ENCODE measurements at regions of chr18 and their contacts with region 1.

Region 1: DNA sequence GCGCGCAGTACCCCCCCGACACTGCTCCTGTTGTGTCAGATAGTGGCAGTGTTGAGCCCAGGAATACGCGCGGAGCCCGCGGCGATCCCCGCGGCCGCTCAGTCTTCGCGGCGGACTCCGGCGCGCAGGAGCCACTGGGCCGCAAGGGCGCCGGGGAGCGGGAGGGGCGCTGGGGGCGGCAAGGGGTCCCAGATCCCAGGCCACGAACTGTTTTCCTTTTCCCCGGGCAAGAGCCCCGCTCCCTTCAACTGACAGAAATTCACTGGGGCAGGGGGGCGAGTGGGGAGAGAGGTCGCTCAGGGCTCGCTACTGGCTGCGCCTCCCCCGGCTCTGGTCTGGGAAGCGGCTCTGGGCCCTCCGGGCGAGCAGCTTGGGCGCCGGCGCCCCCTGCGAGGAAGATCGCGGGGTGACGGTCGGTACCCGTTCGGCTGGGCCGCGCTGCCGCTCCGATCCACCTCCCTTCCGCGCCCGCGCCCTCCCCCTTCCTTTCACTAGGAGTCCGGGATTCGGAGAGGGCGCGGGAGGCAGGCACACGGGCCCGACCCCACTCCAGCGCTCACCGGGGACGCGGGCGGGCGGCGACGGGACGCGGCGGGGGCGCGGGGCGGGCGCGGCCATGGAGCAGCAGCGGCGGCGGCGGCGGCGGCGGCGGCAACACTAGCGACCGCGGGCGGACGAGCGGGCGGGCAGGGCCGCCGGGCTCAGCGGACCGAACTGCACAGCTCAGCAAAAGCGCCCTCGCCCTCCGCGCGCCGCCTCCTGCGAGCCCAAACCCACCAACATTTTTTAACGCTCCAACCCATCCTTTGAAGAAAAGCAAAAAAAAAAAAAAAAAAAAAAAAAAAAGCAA is 1.4 kb upstream of the SETBP1 start:
- DNase-seq: peak; percentile 69 to 97 (median 86)

Region 2: GRCh38 chr18:44013871-44014270 is 665.4 kb before region 1 on chr18:
- intact Hi-C with region 1: no loop called
- DNase-seq: no peak

Region 3: GRCh38 chr18:44771956-44772917 is 93.0 kb after region 1 on chr18:
- intact Hi-C with region 1: no loop called
- DNase-seq: no peak

Region 4: DNA sequence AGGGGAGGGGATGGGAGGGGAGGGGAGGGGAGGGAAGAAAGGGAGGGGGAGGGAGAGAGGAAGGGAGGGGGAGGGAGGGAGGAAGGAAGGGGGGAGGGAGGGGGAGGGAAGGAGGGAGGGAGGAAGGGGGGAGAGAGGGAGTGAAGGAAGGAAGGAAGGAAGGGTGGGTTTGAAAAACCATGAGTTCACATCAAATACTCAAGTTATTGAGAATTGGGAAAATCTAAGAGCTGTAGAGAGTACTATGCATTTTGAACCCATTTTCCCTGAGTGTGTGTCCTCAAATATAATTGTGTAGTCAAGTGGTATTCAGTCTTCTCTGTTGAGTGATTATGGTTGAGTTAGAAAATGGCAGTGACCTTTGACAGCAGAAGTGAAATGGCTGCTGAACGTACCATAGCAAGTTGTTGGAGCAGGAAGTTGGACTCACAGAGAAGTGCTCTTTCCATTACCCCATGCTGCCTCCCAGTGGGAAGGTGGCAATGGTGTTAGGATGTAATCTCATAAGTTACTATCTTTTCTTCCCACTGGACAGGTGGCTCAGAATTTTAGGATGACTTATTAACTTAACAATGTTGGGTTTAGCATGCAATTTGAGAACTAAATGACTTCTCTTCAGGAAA is 216.0 kb after region 1 on chr18:
- intact Hi-C with region 1: loop called (anchors 10 kb)
- DNase-seq: peak in 4 of 10 donors; percentile 15 to 81 (median 38)

Region 5: GRCh38 chr18:45212181-45213039 is 533.1 kb after region 1 on chr18:
- intact Hi-C with region 1: loop called (anchors 5 kb)
- DNase-seq: peak in 9 of 10 donors; percentile 30 to 93 (median 73)